ENCODE measurements at regions of chr17 and their contacts with region 1.

Region 1: GRCh38 chr17:38735161-38735997 is 5.2 kb downstream of the CISD3 start:
- DNase-seq: peak; percentile 60 to 82
- H3K4me3 ChIP-seq: peak overlapping the region in 1 of 4 donors; percentile 16
- H3K27ac ChIP-seq: peak overlapping the region in 2 of 5 donors; percentile 9 to 34
- H3K4me1 ChIP-seq: peaks cover 33 to 57% (median 48%) of the 10 kb centered on the region in 4 donors
- H3K27me3 ChIP-seq: no peaks in the 10 kb centered on the region
- CTCF ChIP-seq: peak in 6 of 7 experiments; percentile 89 to 99 (median 94)
- EP300 ChIP-seq: no peak
- POLR2A ChIP-seq: no peak

Region 2: GRCh38 chr17:38369124-38369886 is 366.1 kb before region 1 on chr17:
- intact Hi-C with region 1: no loop called
- DNase-seq: no peak
- H3K4me3 ChIP-seq: no peak overlapping the region
- H3K27ac ChIP-seq: peak overlapping the region in 1 of 5 donors; percentile 16
- H3K4me1 ChIP-seq: no peaks in the 10 kb centered on the region
- H3K27me3 ChIP-seq: no peaks in the 10 kb centered on the region
- CTCF ChIP-seq: no peak
- EP300 ChIP-seq: no peak
- POLR2A ChIP-seq: no peak

Region 3: GRCh38 chr17:38676706-38677504 is 58.5 kb before region 1 on chr17:
- intact Hi-C with region 1: loop called (anchors 2 kb)
- DNase-seq: peak; percentile 85 to 94
- H3K4me3 ChIP-seq: no peak overlapping the region
- H3K27ac ChIP-seq: peak overlapping the region in 1 of 5 donors; percentile 21
- H3K4me1 ChIP-seq: peaks cover 27 to 41% (median 33%) of the 10 kb centered on the region in 4 donors
- H3K27me3 ChIP-seq: peaks cover 11 to 48% (median 33%) of the 10 kb centered on the region in 3 donors
- CTCF ChIP-seq: peak in 6 of 7 experiments; percentile 65 to 98 (median 96)
- EP300 ChIP-seq: no peak
- POLR2A ChIP-seq: no peak

Region 4: GRCh38 chr17:39573447-39574298 is 838.3 kb after region 1 on chr17:
- intact Hi-C with region 1: no loop called
- DNase-seq: peak; percentile 67 to 89
- H3K4me3 ChIP-seq: peak overlapping the region; percentile 59 to 69 (median 64)
- H3K27ac ChIP-seq: peak overlapping the region; percentile 77 to 89 (median 83)
- H3K4me1 ChIP-seq: peaks cover 6 to 20% (median 17%) of the 10 kb centered on the region in 4 donors
- H3K27me3 ChIP-seq: peaks cover 0 to 16% (median 0%) of the 10 kb centered on the region in 3 donors
- CTCF ChIP-seq: no peak
- EP300 ChIP-seq: no peak
- POLR2A ChIP-seq: no peak